Activated CD4-positive, alpha-beta T cell treated with anti-CD3 and anti-CD28 coated beads, Interleukin-2, amount 10 ng/mL, durations not matched to agents 24 days and 14 days (primary cell): ENCODE measurements at regions of chr7 and their contacts with region 1.

Region 1: DNA sequence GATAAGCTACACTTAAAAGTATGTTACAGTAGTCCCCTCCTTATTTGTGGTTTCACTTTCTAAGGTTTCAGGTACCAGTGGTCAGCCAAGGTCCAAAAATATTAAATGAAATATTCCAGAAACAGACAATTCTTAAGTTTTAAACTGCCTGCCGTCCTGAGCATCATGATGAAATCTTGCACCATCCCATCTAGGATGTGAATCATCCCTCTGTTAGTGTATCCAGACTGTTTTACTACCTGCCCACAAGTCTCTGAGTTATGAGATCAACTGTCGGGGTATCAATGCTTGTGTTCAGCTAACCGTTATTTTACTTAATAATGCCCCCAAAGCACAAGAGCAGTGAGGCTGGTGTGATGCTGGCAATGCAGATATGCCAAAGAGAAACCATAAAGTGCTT is 11.4 kb downstream of the KDM7A start:
- DNase-seq: no peak
- H3K4me3 Mint-ChIP-seq: peak overlapping the region; percentile 58
- H3K27ac Mint-ChIP-seq: peak overlapping the region; percentile 71
- H3K4me1 Mint-ChIP-seq: peaks cover 52% of the 10 kb centered on the region
- H3K27me3 Mint-ChIP-seq: no peaks in the 10 kb centered on the region

Region 2: GRCh38 chr7:140003913-140004382 is 161.5 kb before region 1 on chr7:
- intact Hi-C with region 1: no loop called
- DNase-seq: peak; percentile 82
- H3K4me3 Mint-ChIP-seq: no peak overlapping the region
- H3K27ac Mint-ChIP-seq: no peak overlapping the region
- H3K4me1 Mint-ChIP-seq: peaks cover 4% of the 10 kb centered on the region
- H3K27me3 Mint-ChIP-seq: peaks cover 2% of the 10 kb centered on the region

Region 3: GRCh38 chr7:140134039-140134438 is 31.4 kb before region 1 on chr7:
- intact Hi-C with region 1: loop called (anchors 5 kb)
- DNase-seq: no peak
- H3K4me3 Mint-ChIP-seq: no peak overlapping the region
- H3K27ac Mint-ChIP-seq: no peak overlapping the region
- H3K4me1 Mint-ChIP-seq: peaks cover 11% of the 10 kb centered on the region
- H3K27me3 Mint-ChIP-seq: no peaks in the 10 kb centered on the region